Heart right ventricle (tissue), 16 donors: ENCODE measurements at regions of chr11 and their contacts with region 1.

Region 1: DNA sequence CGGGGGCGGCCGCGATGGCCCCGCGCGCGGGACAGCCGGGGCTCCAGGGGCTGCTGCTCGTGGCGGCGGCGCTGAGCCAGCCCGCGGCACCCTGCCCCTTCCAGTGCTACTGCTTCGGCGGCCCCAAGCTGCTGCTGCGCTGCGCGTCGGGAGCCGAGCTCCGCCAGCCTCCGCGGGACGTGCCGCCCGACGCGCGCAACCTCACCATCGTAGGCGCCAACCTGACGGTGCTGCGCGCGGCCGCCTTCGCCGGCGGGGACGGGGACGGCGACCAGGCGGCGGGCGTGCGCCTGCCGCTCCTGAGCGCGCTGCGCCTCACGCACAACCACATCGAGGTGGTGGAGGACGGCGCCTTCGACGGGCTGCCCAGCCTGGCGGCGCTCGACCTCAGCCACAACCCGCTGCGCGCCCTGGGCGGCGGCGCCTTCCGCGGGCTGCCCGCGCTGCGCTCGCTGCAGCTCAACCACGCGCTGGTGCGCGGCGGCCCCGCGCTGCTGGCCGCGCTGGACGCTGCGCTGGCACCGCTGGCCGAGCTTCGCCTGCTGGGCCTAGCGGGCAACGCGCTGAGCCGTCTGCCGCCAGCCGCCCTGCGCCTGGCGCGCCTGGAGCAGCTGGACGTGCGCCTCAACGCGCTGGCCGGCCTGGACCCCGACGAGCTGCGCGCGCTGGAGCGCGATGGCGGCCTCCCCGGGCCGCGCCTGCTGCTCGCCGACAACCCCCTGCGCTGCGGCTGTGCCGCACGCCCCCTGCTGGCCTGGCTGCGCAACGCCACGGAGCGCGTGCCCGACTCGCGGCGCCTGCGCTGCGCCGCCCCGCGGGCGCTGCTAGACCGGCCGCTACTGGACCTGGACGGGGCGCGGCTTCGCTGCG is 697 bp downstream of the TPBGL start:
- DNase-seq: peak; percentile 78 to 90
- ATAC-seq: peak; percentile 84 to 96 (median 93)
- H3K4me3 ChIP-seq: peak overlapping the region in 9 of 10 donors; percentile 33 to 52 (median 45)
- H3K27ac ChIP-seq: no peak overlapping the region
- H3K4me1 ChIP-seq: peaks cover 0 to 13% (median 8%) of the 10 kb centered on the region in 9 donors
- H3K27me3 ChIP-seq: peaks cover 10 to 86% (median 63%) of the 10 kb centered on the region in 7 donors
- CTCF ChIP-seq: peak; percentile 51 to 99 (median 87)

Region 2: DNA sequence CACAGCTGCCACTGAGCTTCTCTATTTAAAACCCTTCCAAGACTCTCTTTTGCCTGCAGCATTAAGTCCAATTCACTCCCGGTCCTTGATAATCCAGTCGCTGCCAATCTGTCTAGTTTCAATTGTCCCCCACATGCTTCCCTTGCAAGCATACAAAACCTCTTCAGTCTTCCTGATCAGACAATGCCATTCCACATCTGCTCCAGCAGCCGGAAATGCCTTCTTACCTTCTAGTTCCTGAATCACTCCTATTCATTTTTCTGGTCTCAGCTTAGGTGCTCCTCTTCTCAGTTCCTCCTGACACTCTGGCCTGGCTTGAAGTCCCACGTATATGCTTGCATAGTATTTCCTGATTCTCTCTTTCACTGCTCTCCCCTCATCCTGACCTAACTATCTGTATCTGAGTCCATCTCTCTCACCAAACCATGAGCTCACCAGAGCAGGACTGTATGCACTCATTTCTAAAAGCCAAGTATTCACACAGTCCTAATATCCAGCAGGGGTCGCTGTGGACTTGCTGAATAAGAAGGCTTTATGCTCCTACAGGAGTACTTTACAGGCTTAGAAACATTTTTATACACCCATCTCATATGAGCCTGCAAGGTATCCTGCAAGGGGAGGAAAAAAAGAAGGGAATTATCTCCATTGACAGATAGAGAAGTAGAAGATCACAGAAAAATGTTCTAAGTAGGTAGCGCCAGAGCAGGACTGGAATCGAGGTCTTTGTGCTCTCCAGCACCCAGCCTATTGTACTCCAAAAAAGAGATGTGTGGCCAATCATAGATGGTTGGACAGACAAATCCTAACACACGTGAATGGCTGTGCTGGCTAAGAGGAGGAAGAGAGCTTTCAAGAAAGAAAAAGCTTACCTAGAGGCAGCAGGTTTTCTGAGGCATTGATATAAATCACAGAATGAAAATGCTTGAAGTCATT is 311.6 kb before region 1 on chr11:
- intact Hi-C with region 1: loop called in 8 of 10 experiments (anchors 5 to 10 kb)
- DNase-seq: peak in 1 of 2 donors; percentile 74
- ATAC-seq: peak; percentile 78 to 89 (median 85)
- H3K4me3 ChIP-seq: no peak overlapping the region
- H3K27ac ChIP-seq: no peak overlapping the region
- H3K4me1 ChIP-seq: no peaks in the 10 kb centered on the region
- H3K27me3 ChIP-seq: no peaks in the 10 kb centered on the region
- CTCF ChIP-seq: peak; percentile 75 to 91 (median 85)

Region 3: GRCh38 chr11:75142714-75143419 is 98.4 kb before region 1 on chr11:
- intact Hi-C with region 1: loop called in 5 of 10 experiments (anchors 2 to 5 kb)
- DNase-seq: peak; percentile 68 to 76
- ATAC-seq: peak; percentile 76 to 93 (median 89)
- H3K4me3 ChIP-seq: no peak overlapping the region
- H3K27ac ChIP-seq: peak overlapping the region in 5 of 10 donors; percentile 1 to 71 (median 56)
- H3K4me1 ChIP-seq: peaks cover 3 to 60% (median 25%) of the 10 kb centered on the region in 9 donors
- H3K27me3 ChIP-seq: peaks cover 0 to 19% (median 4%) of the 10 kb centered on the region in 7 donors
- CTCF ChIP-seq: no peak

Region 4: GRCh38 chr11:75204685-75205563 is 36.3 kb before region 1 on chr11:
- intact Hi-C with region 1: loop called in 6 of 10 experiments (anchors 5 kb)
- DNase-seq: peak; percentile 89 to 90
- ATAC-seq: peak; percentile 93 to 97 (median 96)
- H3K4me3 ChIP-seq: no peak overlapping the region
- H3K27ac ChIP-seq: peak overlapping the region in 2 of 10 donors; percentile 9 to 48
- H3K4me1 ChIP-seq: peaks cover 0 to 12% (median 3%) of the 10 kb centered on the region in 9 donors
- H3K27me3 ChIP-seq: peaks cover 0 to 3% (median 0%) of the 10 kb centered on the region in 7 donors
- CTCF ChIP-seq: peak; percentile 84 to 95 (median 93)